Heart left ventricle (tissue), 16 donors: ENCODE measurements at regions of chrX and their contacts with region 1.

Region 1: GRCh38 chrX:119574394-119575266 is at the start of gene UBE2A:
- DNase-seq: peak; percentile 92 to 95 (median 92)
- ATAC-seq: peak; percentile 94 to 98 (median 96)
- H3K4me3 ChIP-seq: peak within 1 kb of the TSS; percentile 39 to 88 (median 79)
- H3K27ac ChIP-seq: peak within 1 kb of the TSS; percentile 89 to 96 (median 93)
- H3K4me1 ChIP-seq: peaks cover 0 to 22% (median 8%) of the 10 kb centered on the region in 12 donors
- H3K27me3 ChIP-seq: peaks cover 0 to 7% (median 0%) of the 10 kb centered on the region in 9 donors
- CTCF ChIP-seq: peak; percentile 15 to 61 (median 40)
- POLR2A ChIP-seq: peak; percentile 2 to 82
- total RNA-seq, gene UBE2A: 37.3 to 72.4 (median 65.5) TPM

Region 2: GRCh38 chrX:119482481-119483480 is 91.8 kb before region 1 on chrX:
- intact Hi-C with region 1: loop called in 1 of 10 experiments (anchors 10 kb)
- DNase-seq: peak; percentile 51 to 84 (median 71)
- ATAC-seq: peak; percentile 77 to 86 (median 83)
- H3K4me3 ChIP-seq: peak overlapping the region in 11 of 12 donors; percentile 5 to 61 (median 47)
- H3K27ac ChIP-seq: peak overlapping the region in 11 of 12 donors; percentile 58 to 82 (median 76)
- H3K4me1 ChIP-seq: peaks cover 0 to 17% (median 4%) of the 10 kb centered on the region in 12 donors
- H3K27me3 ChIP-seq: no peaks in the 10 kb centered on the region
- CTCF ChIP-seq: peak; percentile 47 to 83 (median 70)
- POLR2A ChIP-seq: no peak

Region 3: GRCh38 chrX:119606280-119607015 is 31.8 kb after region 1 on chrX and contains the start of gene NKRF:
- intact Hi-C with region 1: loop called in 2 of 10 experiments (anchors 2 to 5 kb)
- DNase-seq: peak; percentile 91 to 96 (median 93)
- ATAC-seq: peak; percentile 86 to 96 (median 94)
- H3K4me3 ChIP-seq: peak within 1 kb of the TSS; percentile 55 to 98 (median 76)
- H3K27ac ChIP-seq: peak within 1 kb of the TSS; percentile 65 to 97 (median 88)
- H3K4me1 ChIP-seq: peaks cover 0 to 7% (median 0%) of the 10 kb centered on the region in 12 donors
- H3K27me3 ChIP-seq: peaks cover 0 to 9% (median 0%) of the 10 kb centered on the region in 9 donors
- CTCF ChIP-seq: no peak
- POLR2A ChIP-seq: peak in 1 of 2 donors; percentile 80
- total RNA-seq, gene NKRF: 3.9 to 6.0 (median 4.8) TPM